Mammary epithelial cell (primary cell): ENCODE measurements at regions of chr5 and their contacts with region 1.

Region 1: GRCh38 chr5:146653560-146653959 is 137.6 kb upstream of the GPR151 start:
- DNase-seq: no peak
- H3K4me3 ChIP-seq: no peak overlapping the region
- H3K27ac ChIP-seq: no peak overlapping the region
- H3K4me1 ChIP-seq: no peaks in the 10 kb centered on the region
- H3K27me3 ChIP-seq: no peaks in the 10 kb centered on the region
- CTCF ChIP-seq: no peak

Region 2: GRCh38 chr5:146574713-146575112 is 78.8 kb before region 1 on chr5:
- CTCF ChIA-PET with region 1: no interaction called
- dilution Hi-C with region 1: loop called (anchors 5 kb)
- in situ Hi-C with region 1: no loop called
- intact Hi-C with region 1: no loop called
- DNase-seq: no peak
- H3K4me3 ChIP-seq: no peak overlapping the region
- H3K27ac ChIP-seq: no peak overlapping the region
- H3K4me1 ChIP-seq: no peaks in the 10 kb centered on the region
- H3K27me3 ChIP-seq: no peaks in the 10 kb centered on the region
- CTCF ChIP-seq: no peak

Region 3: DNA sequence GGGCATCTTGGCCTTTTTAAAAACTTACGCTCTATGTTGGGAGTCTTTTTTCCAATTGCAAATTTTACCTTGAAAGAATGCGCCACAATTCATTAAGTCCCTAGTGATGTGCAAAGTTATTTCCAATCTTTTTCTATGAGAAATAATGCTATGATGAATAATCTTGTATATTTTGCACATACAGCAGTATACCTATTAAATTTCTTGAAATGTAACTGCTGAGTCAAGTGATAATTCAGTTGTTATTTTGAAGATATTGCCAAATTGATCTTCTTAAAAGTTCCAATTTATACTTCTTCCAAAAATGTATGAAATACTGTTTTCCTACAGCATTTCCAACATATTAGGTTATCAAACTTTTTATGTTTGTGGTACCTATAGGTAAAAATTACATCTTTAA is 317.8 kb after region 1 on chr5:
- CTCF ChIA-PET with region 1: no interaction called
- dilution Hi-C with region 1: no loop called
- in situ Hi-C with region 1: loop called (anchors 10 kb)
- intact Hi-C with region 1: no loop called
- DNase-seq: no peak
- H3K4me3 ChIP-seq: no peak overlapping the region
- H3K27ac ChIP-seq: no peak overlapping the region
- H3K4me1 ChIP-seq: no peaks in the 10 kb centered on the region
- H3K27me3 ChIP-seq: no peaks in the 10 kb centered on the region
- CTCF ChIP-seq: no peak

Region 4: GRCh38 chr5:147170603-147171002 is 517.0 kb after region 1 on chr5:
- CTCF ChIA-PET with region 1: no interaction called
- dilution Hi-C with region 1: loop called (anchors 10 kb)
- in situ Hi-C with region 1: no loop called
- intact Hi-C with region 1: no loop called
- DNase-seq: no peak
- H3K4me3 ChIP-seq: no peak overlapping the region
- H3K27ac ChIP-seq: no peak overlapping the region
- H3K4me1 ChIP-seq: peaks cover 2% of the 10 kb centered on the region
- H3K27me3 ChIP-seq: no peaks in the 10 kb centered on the region
- CTCF ChIP-seq: no peak